IMR-90 (cell line): ENCODE measurements at regions of chr1 and their contacts with region 1.

Region 1: DNA sequence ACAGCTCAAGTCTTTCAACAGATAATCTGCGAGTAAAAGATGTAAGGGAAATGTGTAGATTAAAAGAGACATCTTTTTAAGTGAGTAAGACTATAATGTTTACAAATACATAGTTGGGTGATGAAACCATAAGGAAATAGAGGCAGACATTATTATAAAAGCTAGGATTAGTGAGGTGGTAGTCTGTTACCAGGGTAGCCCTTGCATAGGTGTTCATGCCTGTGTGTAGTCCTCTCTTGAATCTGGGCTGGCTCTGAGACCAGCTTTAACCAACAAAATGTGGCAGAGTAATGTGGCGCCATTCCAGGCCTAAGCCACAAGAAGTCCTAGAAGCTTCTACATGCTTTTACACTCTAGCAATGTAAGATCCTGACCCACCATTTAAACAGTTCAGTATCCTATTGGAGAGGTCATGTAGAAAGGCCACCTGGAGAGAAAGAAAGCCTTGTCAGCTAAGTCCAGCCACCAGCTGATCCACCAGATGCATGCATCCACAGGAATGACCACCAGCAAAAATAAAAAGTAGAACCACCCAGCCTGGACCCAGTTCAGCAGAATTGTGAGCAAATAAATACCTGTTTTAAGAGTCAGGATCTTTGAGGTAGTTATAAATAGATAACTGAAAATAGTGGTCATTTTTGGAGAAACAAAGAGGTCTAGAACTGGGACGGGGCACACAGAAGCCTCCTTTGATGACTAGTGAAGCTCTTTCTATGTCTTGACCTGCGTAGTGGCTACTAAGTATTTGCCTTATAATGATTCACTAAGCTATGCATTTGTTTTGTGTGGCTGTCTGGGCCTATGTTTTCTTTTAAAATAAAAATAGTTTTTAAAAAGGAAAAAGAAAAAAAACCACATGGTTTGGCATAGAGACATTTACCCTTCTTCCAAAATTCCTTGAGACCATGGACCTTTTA is 8.1 kb downstream of the NIBAN1 start:
- DNase-seq: no peak
- ATAC-seq: peak; percentile 63
- H3K4me3 ChIP-seq: no peak overlapping the region
- H3K27ac ChIP-seq: peak overlapping the region; percentile 77; the same call in 1 of the 2 replicates
- H3K4me1 ChIP-seq: peaks cover 11% of the 10 kb centered on the region
- H3K27me3 ChIP-seq: no peaks in the 10 kb centered on the region
- CTCF ChIP-seq: no peak
- POLR2A ChIP-seq: no peak
- RAD21 ChIP-seq: no peak

Region 2: GRCh38 chr1:184937729-184938128 is 28.5 kb before region 1 on chr1:
- CTCF ChIA-PET with region 1: no interaction called
- POLR2A ChIA-PET with region 1: interaction called, 12 read pairs
- dilution Hi-C with region 1: no loop called
- in situ Hi-C with region 1: no loop called
- intact Hi-C with region 1: no loop called
- DNase-seq: no peak
- ATAC-seq: no peak
- H3K4me3 ChIP-seq: no peak overlapping the region
- H3K27ac ChIP-seq: no peak overlapping the region
- H3K4me1 ChIP-seq: peaks cover 5% of the 10 kb centered on the region
- H3K27me3 ChIP-seq: no peaks in the 10 kb centered on the region
- CTCF ChIP-seq: no peak
- POLR2A ChIP-seq: no peak
- RAD21 ChIP-seq: no peak